PC-3 (cell line): ENCODE measurements at regions of chr4 and their contacts with region 1.

Region 1: DNA sequence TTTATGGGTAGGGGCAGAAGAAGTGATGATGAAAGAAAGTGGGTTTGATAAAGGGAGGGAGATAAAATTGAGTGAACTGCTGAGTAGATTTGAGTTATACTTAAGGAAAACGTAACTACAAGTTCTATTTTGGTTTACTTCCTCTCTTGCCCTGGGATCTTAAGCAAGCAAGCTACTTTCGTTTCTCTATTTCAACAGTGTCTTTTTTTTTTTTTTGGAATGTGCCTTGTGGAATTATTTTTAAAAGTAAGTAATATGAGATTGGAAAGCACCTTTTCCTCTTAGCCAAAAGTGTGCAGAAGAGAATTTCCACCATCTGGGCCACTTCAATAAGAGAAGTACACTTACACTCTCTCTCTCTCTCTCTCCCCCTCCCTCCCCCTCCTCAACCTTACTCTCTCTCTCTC is 16.0 kb upstream of the C4orf36 start:
- DNase-seq: no peak
- ATAC-seq: no peak
- H3K4me3 ChIP-seq: no peak overlapping the region
- H3K27ac ChIP-seq: no peak overlapping the region
- H3K4me1 ChIP-seq: no peaks in the 10 kb centered on the region
- H3K27me3 ChIP-seq: no peaks in the 10 kb centered on the region
- CTCF ChIP-seq: no peak

Region 2: DNA sequence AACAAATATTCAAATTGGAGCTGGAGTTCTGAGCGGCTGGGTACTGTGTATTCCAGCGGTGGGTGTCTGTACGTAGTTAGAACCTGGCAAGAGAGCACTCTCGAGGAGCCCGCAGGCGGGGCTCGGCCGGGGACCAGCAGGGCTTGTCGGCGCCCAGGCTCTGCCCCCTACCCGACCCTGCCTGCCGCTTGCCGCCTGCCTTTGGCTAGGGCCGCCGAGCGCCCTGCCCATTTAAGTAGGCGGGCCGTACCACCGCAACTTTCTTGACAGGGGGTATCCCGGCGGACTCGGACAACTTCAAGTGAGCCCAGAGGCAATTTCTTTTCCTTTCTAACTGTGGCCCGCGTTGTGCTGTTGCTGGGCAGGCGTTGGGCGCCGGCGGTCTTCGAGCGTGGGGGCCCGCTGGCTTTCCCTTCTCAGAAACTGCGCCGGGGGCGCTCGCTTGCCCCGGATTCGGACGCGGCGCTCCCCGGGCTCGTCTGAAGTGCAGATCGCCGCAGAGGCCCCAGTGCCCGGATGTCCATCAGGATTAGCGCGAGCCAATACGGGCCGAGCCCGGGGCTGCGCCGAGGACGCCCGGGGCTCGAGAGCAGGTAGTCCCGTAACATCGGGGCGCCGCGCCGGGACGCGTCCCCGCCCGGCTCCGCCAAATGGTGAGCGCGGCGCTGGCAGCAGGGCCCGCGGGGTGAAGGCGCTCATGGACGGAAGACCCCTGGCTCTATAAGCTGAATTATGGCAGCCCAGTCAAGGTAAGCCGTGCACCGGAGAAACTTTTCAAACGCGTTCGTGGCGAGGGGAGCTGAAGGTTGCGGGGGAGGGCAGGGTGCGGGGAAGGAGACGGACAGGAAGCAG is 98.6 kb after region 1 on chr4:
- CTCF ChIA-PET with region 1: no interaction called
- POLR2A ChIA-PET with region 1: no interaction called
- intact Hi-C with region 1: no loop called
- DNase-seq: peak; percentile 85
- ATAC-seq: peak; percentile 85
- H3K4me3 ChIP-seq: peak overlapping the region; percentile 98
- H3K27ac ChIP-seq: peak overlapping the region; percentile 93
- H3K4me1 ChIP-seq: peaks cover 33% of the 10 kb centered on the region
- H3K27me3 ChIP-seq: no peaks in the 10 kb centered on the region
- CTCF ChIP-seq: no peak

Region 3: DNA sequence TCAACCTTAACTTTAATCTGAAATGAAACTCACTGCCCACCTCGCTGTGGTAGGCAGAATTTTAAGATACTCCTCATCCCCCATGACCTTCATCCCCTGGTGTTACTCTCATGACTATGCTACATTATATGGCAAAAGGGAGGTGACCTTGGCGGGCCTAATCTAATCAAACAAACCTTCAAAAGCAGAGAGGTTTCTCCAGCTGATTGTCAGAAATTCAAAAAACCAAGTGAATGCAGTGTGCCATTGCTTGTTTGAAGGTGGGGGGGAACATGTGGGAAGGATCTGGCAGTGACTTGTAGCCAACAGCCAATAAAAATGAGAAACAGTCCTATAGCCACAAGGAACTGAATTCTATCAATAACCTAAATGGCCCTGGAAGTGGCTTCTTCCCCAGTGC is 263.7 kb after region 1 on chr4:
- CTCF ChIA-PET with region 1: no interaction called
- POLR2A ChIA-PET with region 1: interaction called, 10 read pairs
- intact Hi-C with region 1: no loop called
- DNase-seq: no peak
- ATAC-seq: no peak
- H3K4me3 ChIP-seq: no peak overlapping the region
- H3K27ac ChIP-seq: no peak overlapping the region
- H3K4me1 ChIP-seq: peaks cover 9% of the 10 kb centered on the region; the same call in 1 of the 2 replicates
- H3K27me3 ChIP-seq: no peaks in the 10 kb centered on the region
- CTCF ChIP-seq: no peak